ENCODE measurements at regions of chr11 and their contacts with region 1.

Region 1: DNA sequence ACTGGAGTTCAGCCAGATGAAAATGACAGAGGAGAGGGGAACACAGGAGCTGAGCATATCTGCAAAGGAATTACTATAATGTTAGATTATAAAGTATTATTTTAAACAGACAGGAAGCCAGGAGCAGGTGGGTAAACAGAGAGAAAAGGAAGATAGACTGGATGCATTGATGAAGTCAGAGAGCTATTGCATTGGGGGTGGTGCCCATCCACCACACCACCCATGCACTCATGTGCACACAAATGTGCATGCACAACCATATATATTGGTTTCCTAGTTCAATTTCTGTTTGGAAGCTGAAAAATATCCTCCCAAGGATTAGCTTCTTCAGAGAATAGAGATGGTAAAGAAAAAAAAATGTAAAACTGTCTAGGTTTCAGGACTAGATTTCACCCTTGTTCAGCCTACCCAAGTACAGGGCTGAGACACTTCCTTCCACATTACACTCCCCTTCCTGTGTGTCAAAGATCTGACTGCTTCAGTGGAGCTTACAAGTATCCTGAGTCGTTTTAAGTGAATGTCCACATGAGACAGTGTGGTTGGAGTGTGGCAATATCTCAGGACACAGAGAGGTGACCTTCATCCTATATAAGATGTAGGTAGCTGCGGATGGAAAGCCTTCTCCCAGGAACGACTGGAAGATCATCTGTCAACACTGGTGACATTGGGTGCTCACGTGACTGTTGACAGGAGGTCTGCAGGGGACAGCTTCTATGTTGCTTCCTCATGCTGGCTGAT is 12.2 kb upstream of the SMPD1 start:
- DNase-seq: no peak
- H3K4me3 Mint-ChIP-seq: no peak overlapping the region
- H3K27ac Mint-ChIP-seq: peak overlapping the region; percentile 59
- H3K4me1 Mint-ChIP-seq: peaks cover 27% of the 10 kb centered on the region
- H3K27me3 Mint-ChIP-seq: no peaks in the 10 kb centered on the region

Region 2: DNA sequence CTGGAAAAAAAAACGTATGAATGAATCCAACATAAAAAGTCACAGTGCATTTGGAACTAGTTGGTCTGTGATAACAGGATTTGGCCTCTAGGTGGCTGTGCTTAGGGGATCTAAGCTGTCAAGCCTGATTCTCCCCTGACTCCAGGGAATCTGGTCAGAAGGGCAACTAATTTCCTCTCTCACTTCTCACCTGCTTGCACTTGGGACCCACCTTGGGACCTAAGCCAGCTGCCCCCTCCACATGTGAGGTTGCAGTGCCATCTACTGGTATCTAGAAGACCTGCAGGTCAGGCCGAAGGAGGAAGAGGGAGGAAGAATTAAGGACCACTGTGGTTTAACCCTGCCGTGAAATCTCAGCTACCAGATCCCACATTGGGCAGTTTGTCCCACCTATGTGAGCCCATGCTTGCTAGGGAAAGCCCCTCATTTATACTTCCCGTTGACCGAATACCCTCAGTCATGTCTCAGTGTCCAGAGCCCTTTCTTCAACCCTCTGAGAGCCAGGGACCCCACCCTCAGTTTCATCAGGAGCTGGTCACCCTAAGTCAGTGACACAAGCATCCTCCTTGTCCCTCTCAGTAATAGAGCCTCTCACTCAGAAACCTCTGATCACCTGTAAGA is 24.6 kb before region 1 on chr11:
- CTCF ChIA-PET with region 1: interaction called, 13 read pairs
- intact Hi-C with region 1: no loop called
- DNase-seq: peak; percentile 67
- H3K4me3 Mint-ChIP-seq: no peak overlapping the region
- H3K27ac Mint-ChIP-seq: no peak overlapping the region
- H3K4me1 Mint-ChIP-seq: peaks cover 9% of the 10 kb centered on the region
- H3K27me3 Mint-ChIP-seq: no peaks in the 10 kb centered on the region

Region 3: GRCh38 chr11:6402561-6402981 is 24.5 kb after region 1 on chr11:
- CTCF ChIA-PET with region 1: interaction called, 40 read pairs
- intact Hi-C with region 1: no loop called
- DNase-seq: peak; percentile 94
- H3K4me3 Mint-ChIP-seq: peak overlapping the region; percentile 64
- H3K27ac Mint-ChIP-seq: peak overlapping the region; percentile 84
- H3K4me1 Mint-ChIP-seq: peaks cover 89% of the 10 kb centered on the region
- H3K27me3 Mint-ChIP-seq: no peaks in the 10 kb centered on the region

Region 4: GRCh38 chr11:6431861-6432260 is 53.8 kb after region 1 on chr11:
- CTCF ChIA-PET with region 1: interaction called, 736 read pairs
- intact Hi-C with region 1: no loop called
- DNase-seq: no peak
- H3K4me3 Mint-ChIP-seq: no peak overlapping the region
- H3K27ac Mint-ChIP-seq: no peak overlapping the region
- H3K4me1 Mint-ChIP-seq: peaks cover 2% of the 10 kb centered on the region
- H3K27me3 Mint-ChIP-seq: no peaks in the 10 kb centered on the region

Region 5: DNA sequence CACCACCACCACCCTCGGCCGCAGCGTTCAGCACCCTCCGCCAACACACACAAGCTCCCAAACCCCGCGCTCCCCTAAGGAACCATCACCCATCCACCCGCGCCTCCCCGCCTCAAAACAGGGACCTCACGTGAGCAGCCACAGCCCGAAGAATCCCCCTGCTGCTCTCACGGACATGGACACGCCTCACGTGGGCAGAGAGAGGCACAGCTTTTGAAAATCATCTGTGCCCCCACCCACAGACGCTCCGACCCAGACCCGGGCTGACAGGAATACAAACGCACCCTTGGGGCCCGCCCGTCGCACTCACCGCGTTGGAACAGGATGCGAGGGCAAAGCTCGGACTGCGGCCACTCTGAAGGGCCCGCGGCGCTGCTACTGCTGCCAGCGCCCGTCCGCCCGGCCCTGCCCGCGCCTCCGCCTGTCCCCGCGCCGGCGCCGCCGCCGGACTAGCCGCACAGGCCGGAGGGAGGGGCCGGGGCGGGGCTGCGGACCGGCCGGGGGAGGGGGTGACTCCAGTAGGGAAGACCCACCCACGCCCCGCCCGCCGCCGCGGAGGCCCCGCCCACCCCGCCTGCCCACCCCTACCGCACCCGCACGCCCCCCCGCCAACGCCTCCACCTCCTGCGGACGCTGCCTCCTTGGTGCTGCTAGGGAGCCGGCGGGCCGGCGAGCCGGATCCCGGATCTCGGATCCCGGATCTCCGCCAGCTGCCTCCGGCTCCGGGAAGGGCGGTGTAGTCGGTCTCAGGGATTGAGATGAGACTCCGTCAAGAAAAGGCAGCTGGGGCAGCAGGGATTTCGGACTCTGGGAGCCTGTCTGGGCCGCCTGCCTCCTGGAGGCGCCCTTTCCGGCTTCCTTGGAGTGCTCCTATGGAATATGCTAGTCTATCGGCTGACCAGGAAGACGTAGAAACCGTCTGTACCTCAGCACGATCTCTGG is 95.7 kb after region 1 on chr11 and contains the start of gene TRIM3:
- CTCF ChIA-PET with region 1: interaction called, 21 read pairs
- intact Hi-C with region 1: no loop called
- DNase-seq: peak; percentile 62
- H3K4me3 Mint-ChIP-seq: peak within 1 kb of the TSS; percentile 80
- H3K27ac Mint-ChIP-seq: no peak within 1 kb of the TSS
- H3K4me1 Mint-ChIP-seq: peaks cover 19% of the 10 kb centered on the region
- H3K27me3 Mint-ChIP-seq: no peaks in the 10 kb centered on the region
- total RNA-seq, gene TRIM3: 7.7 to 9.4 TPM

Region 6: DNA sequence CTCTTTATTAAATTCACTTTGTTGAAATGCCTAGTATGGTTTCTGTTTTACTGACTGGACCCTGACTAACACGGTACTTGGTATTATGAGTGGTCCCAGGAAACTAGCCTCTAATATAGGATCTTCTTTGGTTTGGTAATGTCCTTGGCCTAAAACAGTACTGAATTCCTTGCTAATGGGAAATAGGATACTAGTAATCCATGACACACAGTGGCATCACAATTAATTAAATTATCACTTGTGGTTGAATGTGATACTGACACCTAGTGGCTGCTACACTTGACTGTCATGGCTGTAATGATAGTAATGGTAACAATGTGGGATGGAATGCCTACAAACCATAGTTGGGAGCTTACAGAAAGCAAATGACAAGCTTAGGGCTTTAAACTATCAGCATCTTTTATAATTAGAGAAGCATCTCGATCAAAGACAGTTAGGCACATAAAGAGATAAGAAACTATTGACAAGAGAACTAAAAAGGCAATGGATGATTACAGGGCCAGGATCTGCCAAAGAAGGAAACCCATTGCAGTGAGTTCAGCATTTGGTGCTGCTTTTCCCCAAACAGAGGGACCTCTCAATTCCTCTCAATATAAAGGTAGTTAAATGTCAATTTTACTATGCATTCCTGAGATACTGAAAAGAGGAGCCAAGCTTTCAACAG is 127.6 kb after region 1 on chr11:
- CTCF ChIA-PET with region 1: interaction called, 94 read pairs
- intact Hi-C with region 1: loop called (anchors 1 kb)
- DNase-seq: peak; percentile 21
- H3K4me3 Mint-ChIP-seq: no peak overlapping the region
- H3K27ac Mint-ChIP-seq: no peak overlapping the region
- H3K4me1 Mint-ChIP-seq: no peaks in the 10 kb centered on the region
- H3K27me3 Mint-ChIP-seq: no peaks in the 10 kb centered on the region

Region 7: DNA sequence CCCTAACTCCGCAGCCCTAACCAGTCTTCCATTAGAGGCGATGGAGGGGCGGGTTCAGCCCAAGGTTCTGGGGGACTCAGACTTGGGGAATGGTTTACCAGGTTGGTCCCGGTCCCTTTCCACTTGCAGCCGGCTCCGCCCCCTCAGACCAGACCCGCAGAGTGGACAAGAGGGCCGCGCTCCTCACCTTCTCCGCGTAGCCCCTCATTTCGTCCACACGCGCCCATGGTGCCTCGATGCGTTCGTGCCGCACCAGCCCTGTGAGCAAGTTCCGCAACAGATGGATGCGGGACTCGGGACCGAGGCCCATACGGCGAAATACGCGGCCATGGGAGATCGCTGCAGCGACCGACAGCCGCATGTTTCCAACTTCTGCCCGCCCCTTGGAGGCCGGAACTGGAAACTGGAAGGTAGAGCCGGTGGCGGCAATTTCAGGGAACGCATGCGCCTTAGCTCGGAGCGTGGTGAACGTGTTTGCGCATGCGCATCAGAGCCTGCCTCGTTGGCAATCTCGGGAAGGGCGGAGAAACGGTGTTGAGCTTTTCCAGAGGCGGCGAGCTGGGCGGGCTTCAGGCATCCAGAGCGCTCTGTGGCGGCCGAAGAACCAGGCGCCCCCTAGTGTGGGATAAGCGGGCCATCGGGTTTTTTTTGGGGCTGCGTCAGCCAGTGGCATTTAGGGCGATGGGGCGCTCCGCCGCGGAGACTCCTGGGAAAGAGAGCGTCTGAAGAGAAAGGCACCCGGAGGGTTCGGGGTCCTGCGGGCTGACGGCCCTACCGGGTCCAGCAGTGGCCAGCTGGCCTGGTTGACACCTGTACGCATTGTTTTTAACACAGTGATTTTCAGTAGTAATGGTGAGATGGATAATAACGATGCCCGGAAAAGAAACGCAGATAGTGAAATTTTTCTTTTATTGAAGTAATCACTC is 305.1 kb after region 1 on chr11 and contains the start of gene MRPL17:
- CTCF ChIA-PET with region 1: interaction called, 4 read pairs
- intact Hi-C with region 1: loop called (anchors 1 kb)
- DNase-seq: peak; percentile 100
- H3K4me3 Mint-ChIP-seq: peak within 1 kb of the TSS; percentile 97
- H3K27ac Mint-ChIP-seq: peak within 1 kb of the TSS; percentile 98
- H3K4me1 Mint-ChIP-seq: peaks cover 35% of the 10 kb centered on the region
- H3K27me3 Mint-ChIP-seq: no peaks in the 10 kb centered on the region
- total RNA-seq, gene MRPL17: 99.7 to 102 TPM

Measured in activated naive CD4-positive, alpha-beta T cell treated with anti-CD3 and anti-CD28 coated beads for 36 hours (primary cell).